Activated T-helper 1 cell treated with anti-CD3 and anti-CD28 coated beads, Interleukin-12 subunit alpha, Interleukin-12 subunit beta, Interleukin-2, Interleukin-4 antibody, amounts not matched to agents 30 ng/mL and 10 ng/mL and 1 ng/mL, durations not matched to agents 14 hours and 24 hours and 36 hours (primary cell): ENCODE measurements at regions of chr16 and their contacts with region 1.

Region 1: DNA sequence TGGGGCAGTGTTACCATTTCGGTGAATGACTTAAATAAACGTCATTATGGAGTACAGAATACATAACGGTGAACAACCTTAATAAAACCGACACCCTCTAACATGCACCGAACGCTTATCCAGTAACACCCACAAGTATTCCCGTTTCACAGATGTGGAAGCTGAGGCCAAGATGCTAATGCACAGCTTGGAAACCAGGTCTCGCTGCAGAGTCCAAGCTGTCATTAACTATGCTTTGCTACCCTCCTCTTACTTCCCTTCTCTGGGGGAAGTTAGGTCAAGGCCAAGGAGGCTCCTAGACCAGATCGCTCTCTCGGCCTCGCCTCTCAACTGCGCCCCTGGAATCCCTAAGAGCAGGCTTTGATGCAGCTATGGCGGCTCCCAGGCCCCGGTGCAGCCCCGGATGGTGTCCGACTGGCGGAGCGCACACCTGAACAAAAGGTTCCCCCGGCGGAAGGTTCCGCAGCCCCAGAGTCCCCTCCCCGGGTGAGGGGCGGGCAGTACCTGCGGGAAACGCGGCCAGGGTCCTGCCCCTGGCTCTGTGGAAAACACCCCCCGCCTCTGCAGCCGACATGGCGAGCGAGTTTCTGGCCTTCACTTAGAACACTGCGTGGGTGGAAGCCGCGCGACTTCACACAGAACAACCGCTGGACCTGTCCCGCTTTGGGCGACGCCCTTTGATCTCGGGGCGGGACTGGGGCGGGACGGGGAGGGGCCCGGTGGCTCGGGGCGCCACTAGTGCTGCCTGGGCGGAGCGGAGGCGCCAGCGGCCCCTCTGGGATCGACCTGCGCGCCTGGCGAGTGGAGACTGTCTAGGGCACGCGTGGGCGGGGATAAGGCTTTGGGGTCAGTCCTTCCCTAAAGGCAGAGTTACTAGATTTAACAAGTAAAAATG is at the start of gene CPPED1:
- DNase-seq: peak; percentile 89
- H3K4me3 Mint-ChIP-seq: peak within 1 kb of the TSS; percentile 93
- H3K27ac Mint-ChIP-seq: peak within 1 kb of the TSS; percentile 91
- H3K4me1 Mint-ChIP-seq: peaks cover 26% of the 10 kb centered on the region
- H3K27me3 Mint-ChIP-seq: no peaks in the 10 kb centered on the region
- total RNA-seq, gene CPPED1: 5.0 and 5.4 TPM in 2 replicates

Region 2: GRCh38 chr16:12082226-12082887 is 721.1 kb before region 1 on chr16:
- intact Hi-C with region 1: loop called (anchors 2 kb)
- DNase-seq: no peak
- H3K4me3 Mint-ChIP-seq: no peak overlapping the region
- H3K27ac Mint-ChIP-seq: peak overlapping the region; percentile 71
- H3K4me1 Mint-ChIP-seq: peaks cover 51% of the 10 kb centered on the region
- H3K27me3 Mint-ChIP-seq: no peaks in the 10 kb centered on the region

Region 3: DNA sequence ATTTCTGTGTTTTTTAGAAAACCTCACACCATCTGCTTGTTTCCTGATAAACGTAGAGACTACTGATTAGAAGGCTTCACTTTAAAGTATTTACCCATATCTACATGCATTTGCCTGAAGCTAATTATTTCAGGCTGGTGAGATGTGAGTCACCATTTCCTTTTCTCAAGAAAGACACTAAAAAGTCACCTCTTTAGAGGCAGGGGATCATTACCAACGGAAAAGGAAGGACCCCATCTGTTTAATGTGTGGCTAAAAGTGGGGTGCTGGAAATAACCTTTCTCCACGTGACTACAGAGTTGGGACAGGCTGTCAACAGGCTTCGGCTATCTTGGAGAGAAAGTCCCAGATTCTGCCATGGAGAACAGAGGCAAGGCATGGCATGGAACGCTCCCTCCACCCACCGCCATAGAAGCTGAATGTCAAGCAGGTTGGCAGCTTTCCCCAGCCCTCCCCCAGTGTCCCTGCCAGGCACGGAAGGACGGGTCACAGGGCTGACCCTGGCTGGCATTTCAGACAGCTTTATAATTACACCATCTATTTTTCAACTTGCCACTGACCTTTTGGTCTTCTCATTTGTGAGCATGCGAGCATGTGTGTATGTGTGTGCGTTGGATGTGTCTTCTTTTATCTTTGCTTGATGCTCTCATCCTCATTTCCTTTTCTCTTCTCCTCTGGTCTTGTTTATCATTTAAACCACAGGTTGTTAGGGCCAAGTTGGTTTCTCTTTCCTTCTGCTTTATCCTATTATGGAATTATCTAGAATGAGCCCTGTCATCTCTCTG is 156.8 kb before region 1 on chr16:
- intact Hi-C with region 1: loop called (anchors 1 kb)
- DNase-seq: peak; percentile 26
- H3K4me3 Mint-ChIP-seq: peak overlapping the region; percentile 38
- H3K27ac Mint-ChIP-seq: peak overlapping the region; percentile 94
- H3K4me1 Mint-ChIP-seq: peaks cover 26% of the 10 kb centered on the region
- H3K27me3 Mint-ChIP-seq: no peaks in the 10 kb centered on the region

Region 4: DNA sequence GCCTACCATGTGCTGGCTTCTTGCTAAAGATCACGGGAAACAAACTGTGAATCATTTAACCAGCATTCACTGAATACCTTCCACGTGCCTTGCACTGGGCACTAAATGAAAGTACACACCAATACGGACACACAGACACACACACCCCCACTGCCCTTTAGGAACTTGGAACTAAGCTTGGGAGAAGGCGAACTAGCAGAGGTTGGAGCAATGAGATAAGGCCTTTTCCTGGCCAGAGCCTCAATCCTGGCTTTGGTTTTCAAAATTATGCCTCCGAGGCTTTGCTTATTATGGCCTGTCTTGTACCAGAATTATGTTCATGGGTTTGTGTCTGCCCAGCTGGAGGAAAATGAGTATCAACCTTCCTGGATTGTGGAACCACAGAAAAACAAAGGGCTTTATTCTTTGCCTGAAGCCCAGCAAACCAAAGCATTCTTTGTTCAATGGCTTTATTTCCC is 32.1 kb before region 1 on chr16:
- intact Hi-C with region 1: no loop called
- DNase-seq: no peak
- H3K4me3 Mint-ChIP-seq: no peak overlapping the region
- H3K27ac Mint-ChIP-seq: no peak overlapping the region
- H3K4me1 Mint-ChIP-seq: no peaks in the 10 kb centered on the region
- H3K27me3 Mint-ChIP-seq: no peaks in the 10 kb centered on the region

Region 5: DNA sequence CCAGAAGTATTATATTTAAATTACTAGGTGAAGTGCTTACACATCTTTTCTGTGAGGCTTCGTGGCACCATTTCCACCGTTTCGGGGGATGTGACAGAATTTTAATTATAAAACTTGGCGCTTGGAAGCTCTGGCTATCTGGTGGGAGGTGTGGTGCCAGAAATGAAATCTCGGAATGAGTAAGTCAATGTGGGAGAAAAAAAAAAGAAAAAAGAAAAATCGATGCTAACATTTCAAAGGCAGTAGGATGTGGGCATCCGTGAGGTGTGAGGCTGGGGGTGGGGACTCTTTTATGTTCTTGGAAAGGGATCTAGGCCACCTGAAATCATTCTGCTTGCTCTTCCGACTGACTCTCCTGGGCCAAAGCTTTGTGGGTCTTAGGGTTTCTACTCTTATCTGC is 21.7 kb before region 1 on chr16:
- intact Hi-C with region 1: loop called (anchors 1 kb)
- DNase-seq: no peak
- H3K4me3 Mint-ChIP-seq: no peak overlapping the region
- H3K27ac Mint-ChIP-seq: peak overlapping the region; percentile 70
- H3K4me1 Mint-ChIP-seq: peaks cover 7% of the 10 kb centered on the region
- H3K27me3 Mint-ChIP-seq: no peaks in the 10 kb centered on the region

Region 6: GRCh38 chr16:12793120-12793864 is 10.2 kb before region 1 on chr16:
- intact Hi-C with region 1: no loop called
- DNase-seq: no peak
- H3K4me3 Mint-ChIP-seq: no peak overlapping the region
- H3K27ac Mint-ChIP-seq: no peak overlapping the region
- H3K4me1 Mint-ChIP-seq: no peaks in the 10 kb centered on the region
- H3K27me3 Mint-ChIP-seq: no peaks in the 10 kb centered on the region

Region 7: DNA sequence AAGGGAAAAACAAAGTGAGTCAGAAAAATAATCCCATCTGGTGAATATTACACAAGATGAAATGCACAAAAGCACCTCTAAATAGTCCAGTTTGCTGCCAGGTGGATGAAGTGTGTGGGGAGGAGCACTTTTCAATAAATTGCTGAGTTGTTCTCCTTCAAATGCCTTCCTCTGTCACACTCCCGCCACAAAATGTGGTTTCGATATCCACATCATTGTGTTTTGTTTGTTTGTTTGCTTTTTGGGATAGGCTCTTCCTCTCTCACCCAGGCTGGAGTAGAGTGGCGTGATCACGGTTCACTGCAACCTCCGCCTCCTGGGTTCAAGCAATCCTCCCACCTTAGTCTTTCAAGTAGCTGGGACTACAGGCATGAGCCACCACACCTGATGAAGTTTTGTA is 73.3 kb after region 1 on chr16:
- intact Hi-C with region 1: no loop called
- DNase-seq: no peak
- H3K4me3 Mint-ChIP-seq: no peak overlapping the region
- H3K27ac Mint-ChIP-seq: no peak overlapping the region
- H3K4me1 Mint-ChIP-seq: no peaks in the 10 kb centered on the region
- H3K27me3 Mint-ChIP-seq: no peaks in the 10 kb centered on the region